ENCODE measurements at regions of chr7 and their contacts with region 1.

Region 1: DNA sequence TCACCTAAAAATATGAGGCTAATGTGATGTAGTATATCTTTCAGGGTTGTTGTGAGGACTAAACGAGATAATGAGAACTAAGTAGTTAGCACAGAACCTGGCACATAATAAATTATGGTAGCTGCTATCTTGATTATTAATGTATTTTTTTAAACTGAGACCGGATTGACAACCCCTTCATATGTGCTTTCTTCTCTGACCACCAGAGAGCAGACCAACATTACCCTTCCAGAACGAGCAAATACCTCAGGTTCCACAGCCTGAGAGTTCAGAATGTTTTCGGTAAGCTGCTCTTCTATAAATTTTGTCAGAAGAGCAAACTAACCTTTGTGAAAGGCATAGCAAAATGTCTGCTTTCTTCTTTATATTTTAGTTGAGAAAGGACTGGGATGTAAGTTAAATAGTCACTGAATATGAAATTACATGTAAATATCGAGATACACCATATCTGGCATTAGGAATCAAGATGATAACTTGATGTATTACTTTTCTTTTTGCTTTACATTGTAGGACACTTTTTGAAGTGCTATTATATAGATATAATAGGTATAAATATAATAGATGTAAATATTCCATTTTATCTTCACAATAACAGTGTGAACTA is 13.6 kb upstream of the BPGM start:
- DNase-seq: peak; percentile 44
- ATAC-seq: peak; percentile 82
- H3K4me3 ChIP-seq: no peak overlapping the region
- H3K27ac ChIP-seq: no peak overlapping the region
- H3K4me1 ChIP-seq: no peaks in the 10 kb centered on the region
- H3K27me3 ChIP-seq: no peaks in the 10 kb centered on the region
- CTCF ChIP-seq: peak; percentile 69
- EP300 ChIP-seq: no peak
- POLR2A ChIP-seq: no peak
- RAD21 ChIP-seq: peak; percentile 52; the same call in 1 of the 2 replicates

Region 2: GRCh38 chr7:134669845-134670373 is 36.9 kb after region 1 on chr7:
- CTCF ChIA-PET with region 1: no interaction called
- POLR2A ChIA-PET with region 1: no interaction called
- in situ Hi-C with region 1: no loop called
- intact Hi-C with region 1: no loop called
- DNase-seq: no peak
- ATAC-seq: no peak
- H3K4me3 ChIP-seq: no peak overlapping the region
- H3K27ac ChIP-seq: no peak overlapping the region
- H3K4me1 ChIP-seq: no peaks in the 10 kb centered on the region
- H3K27me3 ChIP-seq: no peaks in the 10 kb centered on the region
- CTCF ChIP-seq: no peak
- EP300 ChIP-seq: no peak
- POLR2A ChIP-seq: no peak
- RAD21 ChIP-seq: no peak

Region 3: DNA sequence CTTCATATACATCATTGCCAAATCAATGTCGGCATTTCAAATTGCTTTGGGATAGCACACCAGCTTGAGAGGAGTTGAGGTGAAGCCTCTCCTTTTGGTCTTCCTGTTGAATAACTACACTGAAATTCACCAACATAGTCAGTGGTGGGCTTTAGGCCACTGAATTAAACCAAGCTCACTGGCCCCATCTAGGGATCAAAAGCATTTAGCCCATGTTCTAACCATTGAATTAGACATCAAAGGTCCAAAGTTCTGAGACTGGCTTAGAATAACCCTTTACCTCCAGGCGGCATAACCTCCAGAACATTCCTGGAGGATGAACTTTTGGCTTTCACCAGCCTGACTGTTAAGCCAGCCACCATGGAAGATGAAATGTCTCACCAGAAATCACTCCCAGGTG is 68.2 kb after region 1 on chr7:
- CTCF ChIA-PET with region 1: interaction called, 4 read pairs
- POLR2A ChIA-PET with region 1: no interaction called
- in situ Hi-C with region 1: loop called (anchors 5 kb)
- intact Hi-C with region 1: loop called (anchors 2 kb)
- DNase-seq: peak; percentile 48
- ATAC-seq: peak; percentile 80
- H3K4me3 ChIP-seq: no peak overlapping the region
- H3K27ac ChIP-seq: no peak overlapping the region
- H3K4me1 ChIP-seq: peaks cover 19% of the 10 kb centered on the region
- H3K27me3 ChIP-seq: peaks cover 0 to 29% of the 10 kb centered on the region in 2 experiments; a peak in 1 of 5 replicates
- CTCF ChIP-seq: peak; percentile 46
- EP300 ChIP-seq: no peak
- POLR2A ChIP-seq: no peak
- RAD21 ChIP-seq: no peak

Region 4: DNA sequence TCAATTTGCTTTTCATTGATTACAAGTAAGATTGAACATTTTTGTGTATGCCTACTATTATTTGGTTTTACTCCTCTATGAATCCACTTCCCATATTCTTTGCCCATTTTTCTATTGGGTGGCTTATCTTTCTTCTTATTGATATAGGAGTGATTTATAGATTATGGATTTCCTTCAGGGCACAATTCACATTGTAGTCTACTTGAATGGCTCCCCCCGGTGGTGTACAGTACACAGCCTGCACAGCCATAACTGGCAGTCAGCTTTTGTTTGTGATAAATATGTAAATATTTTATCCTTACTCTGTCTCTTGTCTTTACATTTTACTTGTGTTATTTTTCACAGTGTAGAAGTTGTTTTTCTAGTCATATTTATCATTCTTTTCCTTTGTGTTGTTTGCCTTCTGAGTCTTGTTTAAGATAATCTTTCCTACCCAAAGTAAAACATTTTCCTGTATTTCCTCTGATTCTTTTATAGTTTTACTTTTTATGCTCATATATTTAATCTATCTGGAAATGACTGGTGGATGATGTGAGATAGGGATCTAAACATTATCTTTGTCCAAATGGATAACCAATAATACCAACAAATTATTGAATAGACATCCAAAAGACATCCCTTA is 122.5 kb after region 1 on chr7:
- CTCF ChIA-PET with region 1: interaction called, 3 read pairs
- POLR2A ChIA-PET with region 1: no interaction called
- in situ Hi-C with region 1: no loop called
- intact Hi-C with region 1: loop called (anchors 2 kb)
- DNase-seq: no peak
- ATAC-seq: no peak
- H3K4me3 ChIP-seq: no peak overlapping the region
- H3K27ac ChIP-seq: no peak overlapping the region
- H3K4me1 ChIP-seq: no peaks in the 10 kb centered on the region
- H3K27me3 ChIP-seq: no peaks in the 10 kb centered on the region; a peak in 1 of 5 replicates
- CTCF ChIP-seq: no peak
- EP300 ChIP-seq: no peak
- POLR2A ChIP-seq: no peak
- RAD21 ChIP-seq: no peak

Region 5: GRCh38 chr7:134954197-134955082 is 321.4 kb after region 1 on chr7:
- CTCF ChIA-PET with region 1: interaction called, 14 read pairs
- POLR2A ChIA-PET with region 1: no interaction called
- in situ Hi-C with region 1: no loop called
- intact Hi-C with region 1: no loop called
- DNase-seq: peak; percentile 16
- ATAC-seq: no peak
- H3K4me3 ChIP-seq: no peak overlapping the region
- H3K27ac ChIP-seq: no peak overlapping the region
- H3K4me1 ChIP-seq: no peaks in the 10 kb centered on the region
- H3K27me3 ChIP-seq: no peaks in the 10 kb centered on the region
- CTCF ChIP-seq: peak; percentile 43
- EP300 ChIP-seq: no peak
- POLR2A ChIP-seq: no peak
- RAD21 ChIP-seq: no peak

Measured in HepG2 (cell line).